Mammary epithelial cell (primary cell): ENCODE measurements at regions of chr16 and their contacts with region 1.

Region 1: GRCh38 chr16:69796351-69797118 is 34.4 kb downstream of the WWP2 start:
- DNase-seq: peak; percentile 49
- H3K4me3 ChIP-seq: no peak overlapping the region
- H3K27ac ChIP-seq: no peak overlapping the region
- H3K4me1 ChIP-seq: no peaks in the 10 kb centered on the region
- H3K27me3 ChIP-seq: no peaks in the 10 kb centered on the region
- CTCF ChIP-seq: peak; percentile 90 to 97

Region 2: GRCh38 chr16:69709456-69710084 is 87.0 kb before region 1 on chr16:
- CTCF ChIA-PET with region 1: interaction called, 10 read pairs
- dilution Hi-C with region 1: no loop called
- in situ Hi-C with region 1: no loop called
- intact Hi-C with region 1: loop called (anchors 2 kb)
- DNase-seq: peak; percentile 60
- H3K4me3 ChIP-seq: no peak overlapping the region
- H3K27ac ChIP-seq: no peak overlapping the region
- H3K4me1 ChIP-seq: peaks cover 33% of the 10 kb centered on the region
- H3K27me3 ChIP-seq: no peaks in the 10 kb centered on the region
- CTCF ChIP-seq: peak; percentile 61 to 63

Region 3: DNA sequence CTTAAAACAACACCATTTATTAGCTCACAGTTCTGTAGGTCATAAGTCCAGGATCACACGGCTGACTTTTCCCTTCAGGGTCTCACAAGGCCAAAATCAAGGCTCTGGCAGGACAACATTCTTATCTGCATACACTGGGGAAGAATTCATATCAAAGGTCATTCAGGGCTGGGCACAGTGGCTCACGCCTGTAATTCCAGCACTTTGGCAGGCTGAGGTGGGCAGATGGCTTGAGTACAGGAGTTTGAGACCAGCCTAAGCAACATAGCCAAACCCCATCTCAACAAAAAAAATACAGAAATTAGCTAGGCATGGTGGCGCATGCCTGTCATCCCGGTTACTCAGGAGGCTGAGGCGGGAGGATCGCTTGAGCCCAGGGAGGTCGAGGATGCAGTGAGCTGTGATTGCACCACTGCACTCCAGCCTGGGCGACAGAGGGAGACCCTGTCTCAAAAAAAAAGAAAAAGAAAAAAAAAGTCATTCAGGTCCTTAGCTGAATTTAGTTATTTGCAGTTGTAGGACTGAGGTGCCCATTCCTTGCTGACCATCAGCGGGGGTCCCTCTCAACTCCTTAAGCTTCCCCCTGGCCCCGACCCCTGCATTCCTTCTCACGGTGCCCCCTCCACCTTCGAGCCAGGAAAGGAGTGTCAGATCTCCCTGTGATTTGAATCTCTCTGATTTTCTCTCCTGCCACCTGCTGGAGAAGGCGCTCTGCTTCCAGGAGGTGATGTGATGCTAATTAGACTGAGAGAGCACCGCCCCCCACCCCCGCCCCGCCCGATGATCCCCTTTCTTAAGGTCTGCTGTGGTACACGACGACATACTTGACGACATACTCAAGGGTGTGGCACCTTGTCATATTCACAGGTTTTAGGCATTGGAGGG is 62.8 kb after region 1 on chr16:
- CTCF ChIA-PET with region 1: interaction called, 6 read pairs
- dilution Hi-C with region 1: no loop called
- in situ Hi-C with region 1: no loop called
- intact Hi-C with region 1: loop called (anchors 1 kb)
- DNase-seq: peak; percentile 19
- H3K4me3 ChIP-seq: no peak overlapping the region
- H3K27ac ChIP-seq: no peak overlapping the region
- H3K4me1 ChIP-seq: no peaks in the 10 kb centered on the region
- H3K27me3 ChIP-seq: no peaks in the 10 kb centered on the region
- CTCF ChIP-seq: peak; percentile 28 to 54

Region 4: GRCh38 chr16:69924777-69925191 is 128.2 kb after region 1 on chr16:
- CTCF ChIA-PET with region 1: interaction called, 5 read pairs
- dilution Hi-C with region 1: no loop called
- in situ Hi-C with region 1: loop called (anchors 5 to 10 kb)
- intact Hi-C with region 1: no loop called
- DNase-seq: peak; percentile 74
- H3K4me3 ChIP-seq: peak overlapping the region in 2 of 3 experiments; percentile 1 to 28
- H3K27ac ChIP-seq: peak overlapping the region; percentile 52
- H3K4me1 ChIP-seq: peaks cover 16% of the 10 kb centered on the region
- H3K27me3 ChIP-seq: no peaks in the 10 kb centered on the region
- CTCF ChIP-seq: no peak

Region 5: GRCh38 chr16:69930117-69930776 is 133.7 kb after region 1 on chr16:
- CTCF ChIA-PET with region 1: interaction called, 5 read pairs
- dilution Hi-C with region 1: no loop called
- in situ Hi-C with region 1: loop called (anchors 5 to 10 kb)
- intact Hi-C with region 1: loop called (anchors 1 kb)
- DNase-seq: peak; percentile 23
- H3K4me3 ChIP-seq: no peak overlapping the region
- H3K27ac ChIP-seq: no peak overlapping the region
- H3K4me1 ChIP-seq: peaks cover 9% of the 10 kb centered on the region
- H3K27me3 ChIP-seq: no peaks in the 10 kb centered on the region
- CTCF ChIP-seq: peak; percentile 53 to 71

Region 6: DNA sequence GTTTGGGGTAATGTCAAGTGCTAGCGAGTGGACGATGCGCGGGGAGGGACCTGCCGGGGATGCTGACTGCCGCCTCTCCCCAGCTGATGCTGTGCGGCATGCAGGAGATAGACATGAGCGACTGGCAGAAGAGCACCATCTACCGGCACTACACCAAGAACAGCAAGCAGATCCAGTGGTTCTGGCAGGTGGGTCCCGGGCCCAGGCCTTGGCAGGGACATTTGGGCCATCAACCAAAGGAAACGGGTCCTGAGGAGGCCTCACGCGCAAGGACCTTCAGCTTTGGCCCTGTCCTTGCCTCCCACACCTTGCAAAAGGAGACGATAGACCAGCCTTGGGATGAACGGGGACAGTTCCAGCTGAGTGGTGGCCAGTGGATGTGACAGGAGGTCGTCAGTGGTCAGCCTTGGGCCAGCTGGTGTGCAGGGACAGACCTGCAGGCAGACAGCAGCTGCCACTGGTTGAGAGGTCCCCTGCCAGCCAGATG is 141.0 kb after region 1 on chr16:
- CTCF ChIA-PET with region 1: no interaction called
- dilution Hi-C with region 1: no loop called
- in situ Hi-C with region 1: no loop called
- intact Hi-C with region 1: loop called (anchors 1 kb)
- DNase-seq: no peak
- H3K4me3 ChIP-seq: no peak overlapping the region
- H3K27ac ChIP-seq: no peak overlapping the region
- H3K4me1 ChIP-seq: no peaks in the 10 kb centered on the region
- H3K27me3 ChIP-seq: no peaks in the 10 kb centered on the region
- CTCF ChIP-seq: peak in 1 of 2 donors; percentile 33